Tibial artery (tissue), 4 donors: ENCODE measurements at regions of chr9 and their contacts with region 1.

Region 1: DNA sequence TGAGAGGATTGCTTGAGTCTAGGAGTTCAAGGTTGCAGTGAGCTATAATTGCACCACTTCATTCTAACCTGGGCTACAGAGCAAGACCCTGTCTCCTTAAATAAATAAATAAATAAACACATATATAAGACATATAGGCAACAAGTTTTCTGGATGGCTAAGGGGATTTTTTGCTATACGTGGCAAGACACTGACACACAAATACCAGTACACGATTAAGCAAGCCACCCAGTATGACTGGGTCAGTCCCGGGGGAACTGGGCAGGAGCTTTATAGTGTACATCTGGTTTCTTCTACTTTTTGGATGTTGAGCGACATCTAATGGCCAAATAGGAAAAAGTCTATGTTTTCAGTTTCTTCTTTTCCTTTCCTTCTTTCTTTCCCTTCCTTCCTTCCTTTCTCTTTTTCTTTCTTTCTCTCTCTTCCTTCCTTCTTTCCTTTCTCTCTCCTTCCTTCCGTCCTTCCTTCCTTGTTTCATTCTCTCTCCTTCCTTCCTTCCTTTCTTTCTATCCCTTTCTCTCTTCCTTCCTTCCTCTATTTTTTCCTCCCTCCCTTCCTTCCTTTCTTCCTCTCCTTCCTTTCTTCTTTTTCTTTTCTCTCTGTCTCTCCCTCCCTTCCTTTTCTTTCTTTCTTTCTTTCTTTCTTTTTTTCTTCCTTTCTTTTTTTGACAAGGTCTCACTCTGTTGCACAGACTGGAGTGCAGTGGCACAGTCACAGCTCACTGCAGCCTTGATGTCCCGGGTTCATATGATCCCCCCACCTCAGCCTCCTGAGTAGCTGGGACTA is 47.0 kb upstream of the PLIN2 start:
- DNase-seq: peak; percentile 87 to 90
- H3K4me3 ChIP-seq: no peak overlapping the region
- H3K27ac ChIP-seq: no peak overlapping the region
- H3K4me1 ChIP-seq: peaks cover 0 to 6% (median 0%) of the 10 kb centered on the region in 4 donors
- H3K27me3 ChIP-seq: no peaks in the 10 kb centered on the region
- CTCF ChIP-seq: peak; percentile 51

Region 2: DNA sequence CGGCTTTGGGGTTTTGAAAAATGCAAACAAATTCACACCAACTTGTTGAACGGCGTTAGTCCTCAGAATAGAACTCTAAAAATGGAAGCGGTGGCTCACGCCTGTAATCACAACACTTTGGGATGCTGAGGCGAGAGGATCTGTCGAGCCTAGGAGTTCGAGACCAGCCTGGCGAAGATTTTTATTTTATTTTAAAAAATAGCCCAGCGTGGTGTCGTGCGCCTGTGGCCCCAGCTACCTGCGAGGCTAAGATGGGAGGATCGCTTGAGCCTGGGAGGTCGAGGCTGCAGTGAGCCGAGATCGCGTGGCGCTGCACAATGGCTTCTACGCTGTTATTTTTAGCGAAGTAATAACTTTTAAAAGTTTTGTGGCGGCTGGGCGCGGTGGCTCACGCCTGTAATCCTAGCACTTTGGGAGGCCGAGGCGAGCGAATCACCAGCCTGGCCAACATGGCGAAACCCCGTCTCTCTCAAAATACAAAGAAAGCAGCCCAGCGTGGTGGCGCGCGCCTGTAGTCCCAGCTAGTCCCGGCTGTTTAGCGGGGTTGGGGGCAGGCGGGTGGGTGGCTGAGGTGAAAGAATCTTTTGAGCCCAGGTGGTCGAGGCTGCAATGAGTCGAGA is 46.3 kb before region 1 on chr9:
- intact Hi-C with region 1: loop called (anchors 5 kb)
- DNase-seq: peak in 1 of 2 donors; percentile 69
- H3K4me3 ChIP-seq: peak overlapping the region; percentile 72 to 84
- H3K27ac ChIP-seq: peak overlapping the region; percentile 95 to 97
- H3K4me1 ChIP-seq: peaks cover 0 to 20% (median 3%) of the 10 kb centered on the region in 4 donors
- H3K27me3 ChIP-seq: no peaks in the 10 kb centered on the region
- CTCF ChIP-seq: no peak

Region 3: DNA sequence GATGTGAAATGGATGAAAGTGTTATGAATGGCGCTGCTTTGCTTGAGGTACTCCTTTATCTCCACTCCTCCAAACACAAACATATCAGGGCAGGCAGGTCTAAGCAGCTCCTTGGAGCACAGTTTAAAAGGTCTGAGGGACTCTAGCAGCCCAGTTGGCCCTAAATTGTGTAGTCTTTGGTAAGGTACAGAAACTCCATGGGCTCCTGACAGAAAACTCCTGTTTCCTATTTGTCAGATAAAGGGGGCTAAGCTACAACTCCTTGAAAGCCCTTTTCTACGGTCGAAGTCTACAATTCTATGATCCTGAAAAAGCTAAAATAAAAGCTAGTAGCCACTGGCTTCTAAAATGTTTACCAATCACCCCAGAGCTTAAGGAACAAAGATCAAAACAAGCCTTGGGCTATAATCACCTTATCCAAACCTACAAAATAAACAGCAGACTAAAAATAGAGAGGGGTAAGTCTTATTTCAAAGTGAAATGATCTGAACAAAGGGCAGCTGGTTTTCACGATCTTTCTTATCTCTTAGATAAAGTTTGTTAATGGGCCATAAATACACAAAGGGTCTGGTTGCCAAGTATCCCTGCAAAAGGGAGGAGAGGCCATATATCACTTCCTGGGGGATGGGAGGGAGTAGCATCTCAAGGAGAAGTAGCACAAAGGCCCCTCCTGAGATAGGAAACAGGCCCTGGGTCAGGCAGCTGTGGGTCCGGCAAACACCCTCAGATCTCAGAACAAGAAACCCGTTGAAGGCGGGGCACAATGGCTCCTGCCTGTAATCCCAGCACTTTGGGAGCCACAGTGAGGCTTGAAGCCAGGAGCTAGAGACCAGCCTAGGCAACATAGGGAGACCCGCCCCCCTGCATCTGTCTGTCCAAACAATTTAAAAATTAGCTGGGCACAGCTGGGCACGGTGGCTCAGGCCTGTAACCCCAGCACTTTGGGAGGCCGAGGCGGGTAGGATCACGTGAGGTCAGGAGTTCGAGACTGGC is 27.9 kb after region 1 on chr9:
- intact Hi-C with region 1: no loop called
- DNase-seq: no peak
- H3K4me3 ChIP-seq: no peak overlapping the region
- H3K27ac ChIP-seq: no peak overlapping the region
- H3K4me1 ChIP-seq: no peaks in the 10 kb centered on the region
- H3K27me3 ChIP-seq: no peaks in the 10 kb centered on the region
- CTCF ChIP-seq: no peak

Region 4: GRCh38 chr9:19416143-19416542 is 241.8 kb after region 1 on chr9:
- intact Hi-C with region 1: no loop called
- DNase-seq: no peak
- H3K4me3 ChIP-seq: no peak overlapping the region
- H3K27ac ChIP-seq: no peak overlapping the region
- H3K4me1 ChIP-seq: no peaks in the 10 kb centered on the region
- H3K27me3 ChIP-seq: no peaks in the 10 kb centered on the region
- CTCF ChIP-seq: no peak